ENCODE measurements at regions of chr2 and their contacts with region 1.

Region 1: DNA sequence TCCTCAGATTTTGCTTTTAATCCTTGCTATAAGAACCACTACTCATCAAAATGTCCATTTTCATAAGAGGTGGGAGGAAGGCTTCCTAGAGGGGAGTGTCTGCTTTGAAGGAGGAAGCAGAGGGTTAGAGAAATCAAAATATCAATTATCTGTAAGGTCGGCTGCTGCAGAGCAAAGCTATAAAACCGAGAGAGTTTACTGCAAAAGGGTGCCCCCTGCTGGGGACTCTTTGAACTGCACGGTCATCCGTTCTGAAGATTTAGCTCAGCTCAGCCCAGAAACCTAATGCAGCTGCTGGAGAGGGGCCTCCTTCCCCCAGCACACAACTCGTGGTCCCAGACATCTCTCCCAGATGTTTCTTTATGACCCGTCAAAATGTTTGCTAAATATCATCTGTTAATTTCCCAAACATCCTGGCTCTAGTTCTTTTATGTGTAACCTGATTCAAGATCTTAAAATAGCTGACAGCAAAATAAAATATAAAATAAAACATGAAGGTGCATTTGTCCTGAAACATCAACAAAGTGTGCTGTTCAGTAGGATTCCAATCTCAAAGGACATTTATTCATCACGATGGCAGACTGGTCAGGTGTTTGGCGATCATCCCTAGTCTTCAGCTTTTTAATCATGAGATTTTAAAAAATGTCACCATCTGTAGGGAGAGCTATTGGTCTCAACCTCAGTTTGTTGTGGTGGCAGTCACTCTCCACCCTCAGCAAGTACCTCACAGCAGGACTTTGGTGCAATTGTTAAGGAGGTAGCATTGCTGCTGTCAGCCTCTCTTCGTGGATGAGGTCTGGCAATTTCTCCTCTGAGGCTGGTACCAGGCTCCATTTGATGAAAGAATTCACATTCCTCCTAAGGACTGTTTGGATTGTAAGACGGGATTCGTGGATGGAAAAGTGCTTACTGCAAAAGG is 185.9 kb downstream of the MTX2 start:
- DNase-seq: peak; percentile 45
- H3K4me3 ChIP-seq: no peak overlapping the region
- H3K27ac ChIP-seq: no peak overlapping the region
- H3K27me3 ChIP-seq: no peaks in the 10 kb centered on the region
- CTCF ChIP-seq: peak; percentile 92

Region 2: GRCh38 chr2:174908284-174908683 is 1546.9 kb before region 1 on chr2:
- CTCF ChIA-PET with region 1: no interaction called
- POLR2A ChIA-PET with region 1: no interaction called
- DNase-seq: no peak
- H3K4me3 ChIP-seq: no peak overlapping the region
- H3K27ac ChIP-seq: no peak overlapping the region
- H3K27me3 ChIP-seq: no peaks in the 10 kb centered on the region
- CTCF ChIP-seq: no peak

Region 3: DNA sequence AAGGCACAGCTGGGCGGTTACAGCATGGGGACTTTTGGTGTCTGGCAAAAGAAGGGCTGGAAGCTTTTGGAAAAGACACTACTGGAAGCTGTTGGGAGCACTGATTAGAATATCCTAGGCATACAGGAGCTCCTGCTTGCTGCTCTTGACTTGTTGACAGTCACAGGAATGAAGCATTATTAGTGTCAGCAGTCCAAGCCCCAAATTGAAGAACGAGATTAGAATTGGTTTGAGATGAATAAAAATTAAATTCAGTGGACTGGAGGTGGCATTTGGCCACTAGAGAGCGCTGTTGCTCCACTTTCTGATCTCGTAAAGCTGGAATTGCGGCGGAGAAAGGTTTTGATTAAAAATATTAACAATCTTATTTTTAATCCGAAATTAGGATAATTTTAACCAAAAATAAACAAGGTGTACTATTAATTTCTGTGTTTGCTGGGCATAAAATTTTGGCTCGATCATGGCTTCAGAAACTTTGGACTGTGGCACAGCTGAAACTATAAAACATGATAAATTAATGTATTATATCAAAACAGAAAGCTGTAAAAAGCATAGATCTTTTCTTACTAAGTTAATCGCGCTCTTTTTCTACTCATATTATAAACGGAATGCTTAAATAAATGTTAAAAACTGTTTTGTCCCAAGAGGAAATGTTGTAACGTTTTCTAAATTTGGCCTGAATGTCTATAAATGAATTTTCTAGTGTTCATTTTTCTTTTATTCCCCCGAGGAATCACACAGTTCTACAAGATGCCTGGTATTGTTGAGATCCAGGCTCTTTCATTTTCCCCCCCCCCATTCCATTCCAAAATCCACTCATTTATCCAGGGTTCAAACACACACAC is 328.0 kb before region 1 on chr2:
- CTCF ChIA-PET with region 1: interaction called, 65 read pairs
- POLR2A ChIA-PET with region 1: interaction called, 10 read pairs
- DNase-seq: peak; percentile 29
- H3K4me3 ChIP-seq: no peak overlapping the region
- H3K27ac ChIP-seq: no peak overlapping the region
- H3K27me3 ChIP-seq: peaks cover 84% of the 10 kb centered on the region
- CTCF ChIP-seq: peak; percentile 83

Region 4: GRCh38 chr2:176200981-176201380 is 254.2 kb before region 1 on chr2:
- CTCF ChIA-PET with region 1: interaction called, 13 read pairs
- POLR2A ChIA-PET with region 1: no interaction called
- DNase-seq: no peak
- H3K4me3 ChIP-seq: no peak overlapping the region
- H3K27ac ChIP-seq: no peak overlapping the region
- H3K27me3 ChIP-seq: peaks cover 2% of the 10 kb centered on the region
- CTCF ChIP-seq: no peak

Region 5: DNA sequence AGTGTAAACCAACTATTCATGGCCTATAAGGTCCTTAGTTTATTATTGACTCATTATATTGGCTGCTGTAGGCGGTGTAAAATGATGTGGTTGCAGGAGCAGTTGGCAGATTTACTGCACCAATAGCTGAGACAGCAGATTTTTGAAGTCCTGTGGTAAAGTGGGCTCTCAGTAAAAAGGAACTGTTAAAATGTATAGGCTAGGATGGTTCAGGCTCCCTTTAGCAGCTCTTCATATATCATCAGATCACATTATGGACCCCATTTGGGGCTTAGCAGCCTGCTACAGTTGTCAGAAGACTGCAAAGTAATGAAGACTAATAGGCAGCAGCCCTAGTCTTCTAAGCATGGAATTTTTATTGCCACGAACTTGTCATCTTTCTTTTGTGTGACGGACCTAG is 158.1 kb before region 1 on chr2:
- CTCF ChIA-PET with region 1: interaction called, 11 read pairs
- POLR2A ChIA-PET with region 1: no interaction called
- DNase-seq: no peak
- H3K4me3 ChIP-seq: no peak overlapping the region
- H3K27ac ChIP-seq: no peak overlapping the region
- H3K27me3 ChIP-seq: no peaks in the 10 kb centered on the region
- CTCF ChIP-seq: no peak

Region 6: GRCh38 chr2:176473177-176473576 is 18.0 kb after region 1 on chr2:
- CTCF ChIA-PET with region 1: interaction called, 55 read pairs
- POLR2A ChIA-PET with region 1: no interaction called
- DNase-seq: no peak
- H3K4me3 ChIP-seq: peak overlapping the region; percentile 20; the same call in 1 of the 2 replicates
- H3K27ac ChIP-seq: no peak overlapping the region
- H3K27me3 ChIP-seq: no peaks in the 10 kb centered on the region
- CTCF ChIP-seq: no peak

Region 7: GRCh38 chr2:176565641-176566323 is 110.6 kb after region 1 on chr2:
- CTCF ChIA-PET with region 1: interaction called, 11 read pairs
- POLR2A ChIA-PET with region 1: interaction called, 8 read pairs
- DNase-seq: no peak
- H3K4me3 ChIP-seq: no peak overlapping the region
- H3K27ac ChIP-seq: peak overlapping the region; percentile 39
- H3K27me3 ChIP-seq: no peaks in the 10 kb centered on the region
- CTCF ChIP-seq: no peak

Region 8: GRCh38 chr2:177021706-177022343 is 566.7 kb after region 1 on chr2:
- CTCF ChIA-PET with region 1: no interaction called
- POLR2A ChIA-PET with region 1: no interaction called
- DNase-seq: no peak
- H3K4me3 ChIP-seq: no peak overlapping the region
- H3K27ac ChIP-seq: no peak overlapping the region
- H3K27me3 ChIP-seq: no peaks in the 10 kb centered on the region
- CTCF ChIP-seq: no peak

Measured in AG04450 (cell line).